ENCODE measurements at regions of chr1 and their contacts with region 1.

Region 1: GRCh38 chr1:178928985-178929384 is 58.1 kb upstream of the ANGPTL1 start:
- DNase-seq: no peak
- ATAC-seq: peak; percentile 57
- H3K4me3 Mint-ChIP-seq: peak overlapping the region; percentile 24
- H3K27ac Mint-ChIP-seq: peak overlapping the region; percentile 80
- H3K4me1 Mint-ChIP-seq: peaks cover 94% of the 10 kb centered on the region
- H3K27me3 Mint-ChIP-seq: no peaks in the 10 kb centered on the region
- CTCF ChIP-seq: no peak

Region 2: GRCh38 chr1:178644308-178645120 is 284.5 kb before region 1 on chr1:
- CTCF ChIA-PET with region 1: no interaction called
- POLR2A ChIA-PET with region 1: no interaction called
- intact Hi-C with region 1: no loop called
- DNase-seq: no peak
- ATAC-seq: no peak
- H3K4me3 Mint-ChIP-seq: no peak overlapping the region
- H3K27ac Mint-ChIP-seq: no peak overlapping the region
- H3K4me1 Mint-ChIP-seq: peaks cover 64% of the 10 kb centered on the region
- H3K27me3 Mint-ChIP-seq: no peaks in the 10 kb centered on the region
- CTCF ChIP-seq: no peak

Region 3: DNA sequence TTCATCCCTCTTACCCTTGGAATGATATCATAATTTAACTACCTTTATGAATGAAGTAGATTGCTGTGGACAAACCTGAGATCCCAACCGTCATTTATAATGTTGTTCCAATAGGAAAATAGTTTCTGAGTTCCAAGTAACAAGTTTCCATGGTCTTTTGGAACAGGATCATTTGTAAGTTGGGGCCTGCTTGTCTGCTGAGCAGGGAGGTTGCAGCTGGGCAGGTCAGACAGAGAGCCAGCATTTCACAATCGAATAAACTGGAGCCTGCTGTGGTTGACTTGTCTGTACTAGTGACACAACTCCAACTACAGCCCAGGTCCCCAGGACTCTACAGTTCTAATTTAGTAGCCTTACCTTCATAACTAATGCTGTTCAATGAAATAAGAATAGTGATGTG is 222.6 kb before region 1 on chr1:
- CTCF ChIA-PET with region 1: no interaction called
- POLR2A ChIA-PET with region 1: no interaction called
- intact Hi-C with region 1: no loop called
- DNase-seq: no peak
- ATAC-seq: no peak
- H3K4me3 Mint-ChIP-seq: no peak overlapping the region
- H3K27ac Mint-ChIP-seq: no peak overlapping the region
- H3K4me1 Mint-ChIP-seq: peaks cover 49% of the 10 kb centered on the region
- H3K27me3 Mint-ChIP-seq: no peaks in the 10 kb centered on the region
- CTCF ChIP-seq: no peak

Region 4: GRCh38 chr1:178885869-178886268 is 43.1 kb before region 1 on chr1:
- CTCF ChIA-PET with region 1: no interaction called
- POLR2A ChIA-PET with region 1: no interaction called
- intact Hi-C with region 1: loop called (anchors 5 kb)
- DNase-seq: no peak
- ATAC-seq: no peak
- H3K4me3 Mint-ChIP-seq: no peak overlapping the region
- H3K27ac Mint-ChIP-seq: peak overlapping the region; percentile 80
- H3K4me1 Mint-ChIP-seq: peaks cover 11% of the 10 kb centered on the region
- H3K27me3 Mint-ChIP-seq: no peaks in the 10 kb centered on the region
- CTCF ChIP-seq: no peak

Region 5: GRCh38 chr1:178916448-178917174 is 12.4 kb before region 1 on chr1:
- CTCF ChIA-PET with region 1: no interaction called
- POLR2A ChIA-PET with region 1: no interaction called
- intact Hi-C with region 1: loop called (anchors 2 kb)
- DNase-seq: no peak
- ATAC-seq: no peak
- H3K4me3 Mint-ChIP-seq: no peak overlapping the region
- H3K27ac Mint-ChIP-seq: peak overlapping the region; percentile 54
- H3K4me1 Mint-ChIP-seq: peaks cover 74% of the 10 kb centered on the region
- H3K27me3 Mint-ChIP-seq: no peaks in the 10 kb centered on the region
- CTCF ChIP-seq: no peak

Region 6: GRCh38 chr1:178953034-178953433 is 24.0 kb after region 1 on chr1:
- CTCF ChIA-PET with region 1: no interaction called
- POLR2A ChIA-PET with region 1: no interaction called
- intact Hi-C with region 1: no loop called
- DNase-seq: no peak
- ATAC-seq: no peak
- H3K4me3 Mint-ChIP-seq: no peak overlapping the region
- H3K27ac Mint-ChIP-seq: no peak overlapping the region
- H3K4me1 Mint-ChIP-seq: no peaks in the 10 kb centered on the region
- H3K27me3 Mint-ChIP-seq: peaks cover 10% of the 10 kb centered on the region
- CTCF ChIP-seq: no peak